Activated CD8-positive, alpha-beta T cell treated with anti-CD3 and anti-CD28 coated beads, Interleukin-2, amount 10 ng/mL, durations not matched to agents 7 days and 5 days (primary cell): ENCODE measurements at regions of chr13 and their contacts with region 1.

Region 1: DNA sequence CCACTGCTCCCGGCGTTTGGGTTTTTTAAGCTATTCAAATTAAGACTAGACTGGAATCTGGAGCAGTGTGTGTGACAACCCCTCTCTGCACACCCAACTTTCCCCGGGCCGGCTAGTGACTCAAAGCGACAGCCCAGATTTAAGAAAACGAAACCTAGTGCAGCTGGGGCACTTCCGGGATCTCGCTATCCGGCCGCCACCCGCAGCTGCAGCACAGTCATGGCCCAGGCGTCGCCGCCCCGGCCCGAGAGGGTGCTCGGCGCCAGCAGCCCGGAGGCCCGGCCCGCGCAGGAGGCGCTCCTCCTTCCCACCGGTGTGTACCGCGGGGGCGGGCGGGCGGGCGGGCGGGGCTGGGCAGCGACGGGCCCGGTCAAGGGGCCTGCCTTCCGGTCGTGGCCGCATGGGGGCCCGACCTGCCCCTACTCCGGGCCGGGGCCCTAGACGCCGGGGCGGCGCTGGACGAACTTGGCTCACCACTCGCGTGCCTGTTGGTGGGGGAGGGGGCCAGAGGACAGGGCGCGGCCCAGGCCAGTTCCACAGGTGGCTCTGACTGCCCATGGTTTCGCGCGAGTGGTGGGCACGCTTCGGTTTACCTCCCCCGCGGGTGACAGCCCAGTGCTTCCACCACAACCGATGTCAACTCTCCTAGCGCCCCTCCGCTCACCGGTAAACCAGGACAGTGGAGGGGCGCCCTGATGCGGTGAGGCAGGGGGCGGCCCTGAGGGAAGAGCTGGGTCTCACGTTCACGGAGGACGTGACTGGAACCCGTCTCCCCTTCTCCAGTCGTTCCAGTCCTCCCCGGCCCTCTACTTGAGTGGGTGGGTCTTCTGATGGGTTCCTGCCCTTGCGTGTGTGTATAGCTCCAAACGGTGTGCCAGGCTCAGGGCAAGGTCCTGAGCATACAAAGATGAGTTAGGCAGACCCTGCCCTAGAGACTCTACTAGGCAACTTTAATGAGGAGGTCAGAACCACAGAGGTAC is at the start of gene PHF11:
- DNase-seq: peak; percentile 90
- ATAC-seq: peak; percentile 87
- H3K4me3 Mint-ChIP-seq: peak within 1 kb of the TSS; percentile 98
- H3K27ac Mint-ChIP-seq: peak within 1 kb of the TSS; percentile 99
- H3K4me1 Mint-ChIP-seq: peaks cover 55% of the 10 kb centered on the region
- H3K27me3 Mint-ChIP-seq: no peaks in the 10 kb centered on the region
- total RNA-seq, gene PHF11: 93.4 to 94.8 TPM

Region 2: GRCh38 chr13:49278211-49278610 is 217.9 kb before region 1 on chr13:
- CTCF ChIA-PET with region 1: no interaction called
- POLR2A ChIA-PET with region 1: no interaction called
- DNase-seq: no peak
- ATAC-seq: no peak
- H3K4me3 Mint-ChIP-seq: no peak overlapping the region
- H3K27ac Mint-ChIP-seq: no peak overlapping the region
- H3K4me1 Mint-ChIP-seq: no peaks in the 10 kb centered on the region
- H3K27me3 Mint-ChIP-seq: no peaks in the 10 kb centered on the region

Region 3: DNA sequence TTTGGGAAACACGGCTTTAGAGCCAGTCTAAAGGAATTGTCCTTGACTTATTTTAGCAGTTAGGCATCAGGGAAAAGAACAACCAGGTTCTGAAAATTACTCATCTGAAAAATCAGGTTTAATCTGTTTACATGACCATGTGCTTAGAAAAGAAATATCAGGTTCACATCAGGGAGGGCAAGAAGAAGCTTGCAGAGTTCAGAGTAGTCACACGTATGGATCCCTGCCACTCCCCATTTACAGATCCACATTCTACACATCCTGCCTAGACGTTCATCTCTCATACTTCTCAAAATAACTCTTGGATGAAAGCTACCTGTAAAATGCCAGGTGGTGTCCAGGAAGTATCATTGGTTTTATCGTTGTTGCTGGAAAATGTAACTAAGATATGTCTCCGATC is 14.3 kb before region 1 on chr13:
- CTCF ChIA-PET with region 1: interaction called, 6 read pairs
- POLR2A ChIA-PET with region 1: interaction called, 16 read pairs
- DNase-seq: no peak
- ATAC-seq: no peak
- H3K4me3 Mint-ChIP-seq: no peak overlapping the region
- H3K27ac Mint-ChIP-seq: no peak overlapping the region
- H3K4me1 Mint-ChIP-seq: no peaks in the 10 kb centered on the region
- H3K27me3 Mint-ChIP-seq: no peaks in the 10 kb centered on the region

Region 4: GRCh38 chr13:49585220-49586157 is 89.4 kb after region 1 on chr13 and contains the start of gene RCBTB1:
- CTCF ChIA-PET with region 1: no interaction called
- POLR2A ChIA-PET with region 1: interaction called, 11 read pairs
- DNase-seq: peak; percentile 73
- ATAC-seq: peak; percentile 98
- H3K4me3 Mint-ChIP-seq: peak within 1 kb of the TSS; percentile 88
- H3K27ac Mint-ChIP-seq: peak within 1 kb of the TSS; percentile 85
- H3K4me1 Mint-ChIP-seq: peaks cover 32% of the 10 kb centered on the region
- H3K27me3 Mint-ChIP-seq: peaks cover 2% of the 10 kb centered on the region
- total RNA-seq, gene RCBTB1: 18.6 to 19.3 TPM